IMR-90 (cell line): ENCODE measurements at regions of chr7 and their contacts with region 1.

Region 1: DNA sequence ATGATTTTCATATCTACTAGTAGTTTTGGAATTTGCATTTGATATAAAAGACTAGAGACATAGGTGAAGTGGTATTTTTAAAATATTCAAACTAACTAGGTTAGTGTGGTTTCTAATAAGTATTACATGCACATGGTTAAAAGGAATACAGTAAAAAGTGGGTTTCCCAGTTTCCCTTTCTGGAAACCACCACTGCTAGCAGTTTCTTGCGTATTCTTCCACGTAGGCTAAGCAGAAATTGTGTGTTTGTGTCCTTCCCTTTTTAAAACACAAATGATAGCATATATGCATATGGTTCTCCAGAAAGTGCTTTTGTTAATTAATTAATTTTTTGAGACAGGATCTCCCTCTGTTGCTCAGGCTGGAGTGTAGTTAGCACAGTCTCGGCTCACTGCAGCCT is 15.4 kb downstream of the NRF1 start:
- DNase-seq: no peak
- ATAC-seq: no peak
- H3K4me3 ChIP-seq: no peak overlapping the region
- H3K27ac ChIP-seq: no peak overlapping the region
- H3K4me1 ChIP-seq: no peaks in the 10 kb centered on the region
- H3K27me3 ChIP-seq: no peaks in the 10 kb centered on the region
- CTCF ChIP-seq: no peak
- POLR2A ChIP-seq: no peak
- RAD21 ChIP-seq: no peak

Region 2: GRCh38 chr7:128986609-128987008 is 640.3 kb before region 1 on chr7:
- CTCF ChIA-PET with region 1: no interaction called
- POLR2A ChIA-PET with region 1: no interaction called
- dilution Hi-C with region 1: no loop called
- in situ Hi-C with region 1: no loop called
- intact Hi-C with region 1: no loop called
- DNase-seq: no peak
- ATAC-seq: no peak
- H3K4me3 ChIP-seq: no peak overlapping the region
- H3K27ac ChIP-seq: no peak overlapping the region
- H3K4me1 ChIP-seq: no peaks in the 10 kb centered on the region
- H3K27me3 ChIP-seq: no peaks in the 10 kb centered on the region
- CTCF ChIP-seq: no peak
- POLR2A ChIP-seq: no peak
- RAD21 ChIP-seq: no peak

Region 3: GRCh38 chr7:129480674-129481365 is 146.1 kb before region 1 on chr7:
- CTCF ChIA-PET with region 1: interaction called, 14 read pairs
- POLR2A ChIA-PET with region 1: no interaction called
- dilution Hi-C with region 1: no loop called
- in situ Hi-C with region 1: no loop called
- intact Hi-C with region 1: no loop called
- DNase-seq: peak; percentile 82
- ATAC-seq: peak; percentile 93
- H3K4me3 ChIP-seq: no peak overlapping the region
- H3K27ac ChIP-seq: peak overlapping the region; percentile 46; the same call in 1 of the 2 replicates
- H3K4me1 ChIP-seq: peaks cover 5% of the 10 kb centered on the region; the same call in 1 of the 2 replicates
- H3K27me3 ChIP-seq: no peaks in the 10 kb centered on the region
- CTCF ChIP-seq: no peak
- POLR2A ChIP-seq: no peak
- RAD21 ChIP-seq: no peak